GM23248 (cell line): ENCODE measurements at regions of chr22 and their contacts with region 1.

Region 1: DNA sequence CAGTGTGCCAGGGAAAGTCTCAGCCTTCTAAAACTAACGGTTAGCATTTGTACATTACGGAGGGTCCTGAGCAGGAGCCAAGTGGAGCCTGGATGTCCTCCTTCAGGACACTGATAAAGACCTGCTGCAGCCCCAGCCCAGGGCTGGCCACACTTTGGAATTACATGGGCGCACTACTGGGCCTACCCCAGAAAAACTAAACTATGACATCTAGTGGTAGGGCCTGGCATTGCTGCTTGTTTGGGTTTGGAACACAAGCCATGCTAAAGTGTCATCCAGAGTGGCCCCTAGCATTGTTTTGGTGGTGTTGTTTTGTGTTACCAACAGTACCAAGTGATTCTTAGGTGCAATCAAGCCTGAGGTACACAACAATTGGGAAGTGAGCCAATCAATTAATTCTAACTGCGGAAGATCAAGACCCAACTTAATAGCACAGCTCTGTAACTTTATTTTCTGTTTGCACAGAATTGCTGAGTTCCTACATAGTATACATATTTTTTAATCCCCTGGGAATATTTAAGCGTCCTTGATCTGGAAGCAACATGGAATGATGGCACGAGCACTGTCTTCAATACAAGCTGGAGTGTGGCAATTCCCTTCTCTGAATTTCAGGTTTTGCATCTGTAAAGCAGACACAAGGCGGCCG is 340.7 kb downstream of the LARGE1 start:
- DNase-seq: peak; percentile 58
- H3K4me3 ChIP-seq: no peak overlapping the region
- H3K27ac ChIP-seq: no peak overlapping the region
- H3K4me1 ChIP-seq: no peaks in the 10 kb centered on the region
- H3K27me3 ChIP-seq: no peaks in the 10 kb centered on the region

Region 2: DNA sequence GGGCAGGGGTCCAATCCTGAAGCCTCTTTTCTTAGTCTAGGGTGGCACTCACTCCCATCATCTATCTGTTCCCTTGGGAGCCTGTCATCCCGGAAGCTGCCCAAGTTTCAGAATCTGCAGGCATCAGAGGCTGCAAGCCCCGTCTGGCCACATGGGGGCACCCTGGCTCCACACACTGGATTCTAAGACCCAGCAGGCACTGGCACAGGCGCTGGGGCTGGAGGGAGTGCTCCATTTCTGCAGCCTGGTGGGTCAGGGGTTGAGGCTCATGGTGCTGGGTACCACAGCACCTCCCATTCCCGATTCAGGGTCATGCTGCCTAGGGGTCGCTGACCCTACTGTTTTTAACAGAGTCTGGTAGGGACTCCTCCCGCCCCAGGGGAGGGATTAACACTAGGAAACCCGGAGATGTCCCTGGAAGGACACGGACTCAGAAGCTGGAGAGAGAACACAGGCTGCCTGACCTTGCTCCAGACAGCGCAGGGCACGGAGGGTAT is 277.5 kb before region 1 on chr22:
- in situ Hi-C with region 1: loop called (anchors 10 kb)
- DNase-seq: peak; percentile 82
- H3K4me3 ChIP-seq: no peak overlapping the region
- H3K27ac ChIP-seq: no peak overlapping the region
- H3K4me1 ChIP-seq: no peaks in the 10 kb centered on the region
- H3K27me3 ChIP-seq: no peaks in the 10 kb centered on the region